ENCODE measurements at regions of chr2 and their contacts with region 1.

Region 1: DNA sequence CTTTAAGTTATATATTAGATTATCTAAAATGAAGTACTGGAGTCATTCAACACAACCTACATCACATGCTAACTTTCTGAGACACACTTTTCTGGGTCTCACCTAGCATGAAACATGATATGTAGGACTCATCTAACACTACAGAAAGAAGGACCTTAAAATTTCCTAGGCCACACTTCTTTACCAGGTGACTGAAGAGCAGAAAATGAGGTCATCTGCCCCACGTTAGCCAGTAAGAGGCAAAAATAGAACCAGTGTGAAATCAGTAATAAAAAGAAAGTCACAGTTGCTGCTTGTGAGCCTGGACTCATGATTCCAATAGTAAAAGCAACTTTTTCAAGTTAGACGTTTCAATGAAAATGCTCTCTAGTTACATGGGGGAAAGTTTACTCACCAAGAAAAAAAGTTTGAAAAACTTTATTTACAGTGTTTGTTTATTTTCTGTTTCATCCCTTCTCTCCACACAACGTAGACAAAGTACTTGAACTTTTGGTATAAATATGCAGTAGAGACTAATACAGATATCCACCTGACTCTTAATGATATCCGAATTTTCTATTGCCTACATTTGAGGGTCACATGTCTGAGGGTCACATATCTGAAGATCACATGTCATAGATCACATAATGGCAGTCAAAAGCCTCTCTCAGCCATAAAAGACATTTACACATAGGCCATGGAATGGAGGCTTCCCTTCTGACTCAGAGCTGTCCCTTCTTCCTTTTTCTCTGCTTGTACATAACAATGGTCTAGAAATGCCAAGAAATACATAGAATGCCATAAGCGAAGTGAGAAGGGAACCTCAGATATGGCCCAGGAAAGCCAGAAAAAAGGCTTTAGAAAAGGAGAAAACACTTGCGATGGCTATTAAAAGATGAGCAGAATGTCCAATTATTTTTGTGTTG is 362.9 kb downstream of the ZEB2 start:
- DNase-seq: no peak

Region 2: GRCh38 chr2:143524119-143524553 is 632.9 kb before region 1 on chr2:
- intact Hi-C with region 1: no loop called
- DNase-seq: no peak

Region 3: DNA sequence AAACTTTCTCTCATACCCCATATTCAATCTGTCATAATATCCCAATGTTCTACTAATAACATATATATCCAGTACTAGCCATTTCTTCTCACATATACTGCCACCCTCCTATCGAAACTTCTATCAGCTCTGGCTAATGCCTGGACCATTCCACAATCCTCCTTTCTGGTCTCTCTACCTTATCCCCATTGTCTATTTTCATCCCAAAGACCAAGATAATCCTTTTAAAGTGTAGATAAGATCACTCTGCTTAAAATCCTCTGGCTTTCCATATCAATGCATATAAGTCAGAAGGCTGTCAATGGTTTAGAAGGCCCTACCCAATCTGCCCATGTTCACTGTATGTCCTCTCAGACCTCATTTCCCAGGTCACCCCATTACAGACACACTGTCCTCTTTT is 133.3 kb after region 1 on chr2:
- intact Hi-C with region 1: loop called in 1 of 2 experiments (anchors 5 kb)
- DNase-seq: no peak

Measured in posterior vena cava (tissue), 2 donors.